ENCODE measurements at regions of chr22 and their contacts with region 1.

Region 1: GRCh38 chr22:37807410-37808293 is at the start of gene GCAT:
- DNase-seq: peak; percentile 98
- H3K4me3 ChIP-seq: peak within 1 kb of the TSS; percentile 57 to 68 (median 64)
- H3K27ac ChIP-seq: peak within 1 kb of the TSS; percentile 87 to 96 (median 91)
- H3K4me1 ChIP-seq: peaks cover 0 to 55% (median 36%) of the 10 kb centered on the region in 4 donors
- H3K27me3 ChIP-seq: no peaks in the 10 kb centered on the region
- CTCF ChIP-seq: no peak
- EP300 ChIP-seq: no peak
- POLR2A ChIP-seq: peak; percentile 58 to 65
- total RNA-seq, gene GCAT: 5.1 to 14.1 (median 7.7) TPM

Region 2: DNA sequence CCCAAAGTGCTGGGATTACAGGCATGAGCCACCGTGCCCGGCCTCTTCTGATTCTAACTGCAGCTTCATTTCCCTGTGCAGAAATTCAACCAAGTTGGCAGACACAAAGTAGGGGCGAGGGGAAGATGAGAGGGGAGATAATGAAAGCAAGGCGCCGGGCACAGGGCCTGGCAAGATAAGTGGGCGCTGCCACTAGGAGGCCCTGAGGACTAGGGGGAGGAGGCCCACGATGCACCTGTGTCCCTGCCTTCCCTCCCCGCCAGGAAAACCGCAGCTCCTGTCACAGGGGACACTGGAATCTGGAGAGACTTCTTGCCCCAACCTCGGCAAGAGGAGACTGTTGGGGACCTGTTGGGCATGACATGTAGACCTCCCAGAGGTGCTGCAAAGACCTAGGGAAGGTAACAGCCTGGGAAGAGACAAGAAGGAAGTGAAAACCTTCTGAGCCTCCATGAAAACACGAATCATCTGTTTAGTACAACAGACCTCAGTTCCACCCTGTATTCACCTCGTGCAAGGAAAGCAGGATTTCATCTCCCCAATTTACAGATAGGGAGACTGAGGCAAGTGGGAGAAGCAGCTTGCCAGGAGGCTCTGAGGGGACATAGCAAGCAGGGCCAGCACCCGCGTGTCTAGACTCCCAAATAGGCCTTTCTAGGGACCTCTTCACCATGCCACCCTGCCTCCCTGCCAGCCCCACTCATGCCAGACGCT is 135.3 kb before region 1 on chr22:
- intact Hi-C with region 1: no loop called
- DNase-seq: no peak
- H3K4me3 ChIP-seq: no peak overlapping the region
- H3K27ac ChIP-seq: peak overlapping the region; percentile 92 to 99 (median 95)
- H3K4me1 ChIP-seq: peaks cover 0 to 55% (median 42%) of the 10 kb centered on the region in 4 donors
- H3K27me3 ChIP-seq: no peaks in the 10 kb centered on the region
- CTCF ChIP-seq: no peak
- EP300 ChIP-seq: no peak
- POLR2A ChIP-seq: no peak

Region 3: DNA sequence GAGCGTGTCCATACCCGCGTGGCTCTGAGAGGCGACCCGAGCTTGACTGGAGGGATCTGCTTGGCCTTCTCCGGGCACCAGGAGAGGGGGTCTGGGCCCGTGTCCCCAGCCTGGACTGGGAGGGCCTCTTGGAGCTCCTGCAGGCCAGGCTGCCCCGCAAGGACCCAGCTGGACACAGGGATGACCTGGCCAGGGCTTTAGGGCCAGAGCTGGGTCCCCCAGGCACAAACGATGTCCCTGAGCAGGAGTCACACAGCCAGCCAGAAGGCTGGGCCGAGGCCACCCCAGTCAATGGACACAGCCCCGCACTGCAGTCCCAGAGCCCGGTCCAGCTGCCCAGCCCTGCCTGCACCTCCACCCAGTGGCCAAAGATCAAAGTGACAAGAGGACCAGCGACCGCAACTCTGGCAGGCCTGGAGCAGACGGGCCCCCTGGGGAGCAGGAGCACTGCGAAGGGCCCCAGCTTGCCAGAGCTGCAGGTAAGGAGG is 72.6 kb before region 1 on chr22:
- intact Hi-C with region 1: no loop called
- DNase-seq: peak; percentile 75
- H3K4me3 ChIP-seq: no peak overlapping the region
- H3K27ac ChIP-seq: no peak overlapping the region
- H3K4me1 ChIP-seq: peaks cover 0 to 14% (median 6%) of the 10 kb centered on the region in 4 donors
- H3K27me3 ChIP-seq: no peaks in the 10 kb centered on the region
- CTCF ChIP-seq: peak in 2 of 4 experiments; percentile 15 to 16
- EP300 ChIP-seq: no peak
- POLR2A ChIP-seq: no peak

Region 4: GRCh38 chr22:37745548-37746365 is 61.9 kb before region 1 on chr22:
- intact Hi-C with region 1: loop called (anchors 5 kb)
- DNase-seq: peak; percentile 96
- H3K4me3 ChIP-seq: peak overlapping the region; percentile 72 to 99 (median 76)
- H3K27ac ChIP-seq: peak overlapping the region; percentile 91 to 98 (median 98)
- H3K4me1 ChIP-seq: peaks cover 0 to 89% (median 84%) of the 10 kb centered on the region in 4 donors
- H3K27me3 ChIP-seq: no peaks in the 10 kb centered on the region
- CTCF ChIP-seq: no peak
- EP300 ChIP-seq: no peak
- POLR2A ChIP-seq: no peak

Measured in sigmoid colon (tissue), 7 donors.